ENCODE measurements at regions of chr5 and their contacts with region 1.

Region 1: GRCh38 chr5:140131967-140132409 is 6.3 kb downstream of the IGIP start:
- DNase-seq: no peak
- ATAC-seq: peak in 1 of 2 donors; percentile 19
- H3K4me3 ChIP-seq: no peak overlapping the region
- H3K27ac ChIP-seq: peak overlapping the region in 1 of 4 donors; percentile 3
- H3K4me1 ChIP-seq: peaks cover 26 to 28% of the 10 kb centered on the region in 2 donors
- H3K27me3 ChIP-seq: no peaks in the 10 kb centered on the region
- CTCF ChIP-seq: no peak
- POLR2A ChIP-seq: no peak

Region 2: GRCh38 chr5:139847790-139848507 is 284.0 kb before region 1 on chr5:
- in situ Hi-C with region 1: no loop called
- intact Hi-C with region 1: no loop called
- DNase-seq: no peak
- ATAC-seq: peak; percentile 42 to 48
- H3K4me3 ChIP-seq: peak overlapping the region; percentile 28 to 55 (median 47)
- H3K27ac ChIP-seq: peak overlapping the region in 2 of 4 donors; percentile 31 to 47
- H3K4me1 ChIP-seq: peaks cover 0 to 11% of the 10 kb centered on the region in 2 donors
- H3K27me3 ChIP-seq: no peaks in the 10 kb centered on the region
- CTCF ChIP-seq: no peak
- POLR2A ChIP-seq: no peak

Region 3: GRCh38 chr5:139882961-139883539 is 248.9 kb before region 1 on chr5:
- in situ Hi-C with region 1: no loop called
- intact Hi-C with region 1: no loop called
- DNase-seq: peak; percentile 53 to 67
- ATAC-seq: peak; percentile 35 to 59
- H3K4me3 ChIP-seq: no peak overlapping the region
- H3K27ac ChIP-seq: peak overlapping the region in 1 of 4 donors; percentile 66
- H3K4me1 ChIP-seq: peaks cover 18 to 19% of the 10 kb centered on the region in 2 donors
- H3K27me3 ChIP-seq: no peaks in the 10 kb centered on the region
- CTCF ChIP-seq: no peak
- POLR2A ChIP-seq: no peak

Region 4: GRCh38 chr5:140041492-140042392 is 90.2 kb before region 1 on chr5:
- in situ Hi-C with region 1: no loop called
- intact Hi-C with region 1: no loop called
- DNase-seq: peak; percentile 88 to 95
- ATAC-seq: peak; percentile 49 to 62
- H3K4me3 ChIP-seq: peak overlapping the region; percentile 82 to 97 (median 87)
- H3K27ac ChIP-seq: peak overlapping the region; percentile 98 to 99 (median 98)
- H3K4me1 ChIP-seq: peaks cover 31 to 37% of the 10 kb centered on the region in 2 donors
- H3K27me3 ChIP-seq: no peaks in the 10 kb centered on the region
- CTCF ChIP-seq: no peak
- POLR2A ChIP-seq: peak; percentile 70 to 78

Region 5: DNA sequence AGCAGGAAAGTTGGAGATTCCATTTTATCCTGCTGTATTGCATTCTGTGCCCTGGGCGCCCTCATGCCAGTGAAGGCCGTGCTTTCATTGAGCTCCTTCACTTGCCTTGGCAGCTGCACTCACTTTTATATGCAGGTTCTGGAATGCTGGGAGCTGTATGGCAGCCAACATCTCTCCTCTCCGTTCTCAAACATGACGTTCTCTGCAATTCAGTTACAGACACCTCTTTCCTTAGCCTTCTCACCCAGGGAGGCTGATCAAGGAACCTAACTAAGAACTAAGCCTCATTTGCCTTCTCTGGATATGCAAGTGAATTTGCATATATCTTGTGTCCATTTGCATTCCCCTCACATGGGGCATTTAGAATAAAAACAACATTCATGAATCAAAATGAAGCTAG is 47.4 kb before region 1 on chr5:
- in situ Hi-C with region 1: loop called in 1 of 4 experiments (anchors 10 kb)
- intact Hi-C with region 1: no loop called
- DNase-seq: no peak
- ATAC-seq: no peak
- H3K4me3 ChIP-seq: no peak overlapping the region
- H3K27ac ChIP-seq: no peak overlapping the region
- H3K4me1 ChIP-seq: no peaks in the 10 kb centered on the region
- H3K27me3 ChIP-seq: peaks cover 0 to 3% (median 0%) of the 10 kb centered on the region in 3 donors
- CTCF ChIP-seq: no peak
- POLR2A ChIP-seq: no peak

Measured in gastrocnemius medialis (tissue), 4 donors.